Posterior cingulate gyrus (tissue), 11 donors: ENCODE measurements at regions of chr9 and their contacts with region 1.

Region 1: DNA sequence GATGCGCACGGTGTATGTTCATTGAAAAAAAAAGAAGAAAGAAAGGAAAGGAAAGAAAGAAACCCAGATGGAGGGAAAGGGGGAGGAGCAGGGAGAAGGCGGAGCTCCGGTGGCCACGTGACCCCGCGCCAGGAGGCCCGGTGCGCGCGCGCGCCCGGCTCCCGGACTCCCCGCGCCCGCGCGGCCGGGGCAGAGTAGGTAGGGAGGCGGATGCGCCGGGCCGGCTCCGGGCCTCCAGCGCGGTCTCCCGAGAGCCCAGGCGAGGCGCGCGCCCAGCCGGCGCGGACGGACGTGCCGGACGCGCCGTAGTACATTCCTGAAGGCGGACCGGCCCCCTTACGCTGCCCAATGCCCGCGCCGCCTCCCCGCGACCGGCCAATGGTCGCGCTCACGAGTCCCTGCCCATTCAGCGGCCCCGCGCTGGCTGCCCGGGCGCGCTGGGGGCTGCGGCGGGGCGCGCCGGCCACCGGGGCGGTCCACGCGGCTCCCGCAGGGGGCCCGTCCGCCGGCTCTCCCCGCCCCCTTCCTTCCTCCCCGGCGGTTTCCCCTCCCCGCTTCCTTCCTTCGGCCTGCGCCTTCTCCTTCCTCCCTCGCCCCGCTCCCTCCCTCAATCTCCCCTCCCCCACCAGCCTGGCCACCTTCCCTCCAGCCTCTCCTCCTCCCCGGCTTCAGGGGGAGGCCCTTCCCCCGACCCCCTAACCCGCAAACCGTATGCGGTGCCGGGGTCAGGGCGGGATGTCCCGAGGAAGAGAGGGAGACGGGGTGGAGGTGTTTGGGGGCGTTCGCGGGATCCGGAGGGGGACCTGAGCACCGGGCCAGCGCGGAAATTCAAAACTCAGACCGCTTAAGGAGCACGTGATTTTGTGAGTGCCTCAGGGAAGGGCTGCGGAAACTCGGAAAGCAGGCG is 5.8 kb downstream of the PTCH1 start:
- DNase-seq: peak; percentile 80 to 98 (median 87)

Region 2: DNA sequence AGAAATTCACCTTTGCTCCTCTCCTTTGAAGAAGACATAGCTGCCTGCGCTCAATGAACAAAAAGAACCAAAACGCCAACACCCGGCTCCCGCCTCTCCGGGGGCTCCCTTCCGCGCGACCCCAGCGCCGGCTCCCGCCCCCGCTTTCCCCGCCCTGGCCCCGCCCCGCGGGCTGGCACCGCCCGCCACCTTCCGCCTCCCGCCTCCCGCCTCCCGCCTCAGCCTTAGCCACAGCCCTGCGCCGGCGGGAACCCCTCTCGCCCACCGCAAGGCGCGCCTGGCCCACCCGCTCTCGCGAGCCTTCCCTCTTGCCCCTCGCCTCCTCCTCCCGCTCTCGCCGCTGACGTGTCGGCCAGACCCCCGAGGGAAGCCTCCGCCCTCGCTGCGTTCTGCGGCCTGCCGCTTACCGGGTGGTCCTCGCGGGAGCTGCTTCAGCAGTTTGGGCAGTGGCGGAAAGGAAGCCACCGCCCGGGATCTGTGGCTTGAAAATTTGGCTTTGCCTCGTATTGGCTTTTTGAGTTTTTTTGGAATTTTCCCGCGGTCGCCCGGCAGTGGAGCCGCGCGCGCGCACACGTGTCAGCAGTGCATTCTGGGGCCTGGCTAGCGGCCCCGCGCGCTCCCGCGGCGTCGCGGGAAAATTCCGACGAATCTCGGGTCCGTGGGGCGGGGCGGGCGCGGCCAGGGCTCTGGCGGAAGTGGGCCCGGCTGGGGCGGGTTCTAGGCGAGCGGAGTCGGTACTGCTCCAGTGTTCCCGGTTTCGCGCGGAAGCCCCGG is 193.7 kb before region 1 on chr9 and contains the start of gene FANCC:
- intact Hi-C with region 1: loop called (anchors 5 kb)
- DNase-seq: peak; percentile 83 to 98 (median 92)

Region 3: GRCh38 chr9:95462249-95463147 is 48.5 kb before region 1 on chr9:
- intact Hi-C with region 1: loop called (anchors 5 kb)
- DNase-seq: peak; percentile 60 to 96 (median 78)

Region 4: GRCh38 chr9:95875305-95876137 is 364.6 kb after region 1 on chr9 and contains the start of gene ERCC6L2:
- intact Hi-C with region 1: loop called (anchors 5 kb)
- DNase-seq: peak; percentile 85 to 98 (median 90)

Region 5: GRCh38 chr9:96009690-96010472 is 498.9 kb after region 1 on chr9:
- intact Hi-C with region 1: no loop called
- DNase-seq: no peak

Region 6: GRCh38 chr9:96116275-96117064 is 605.5 kb after region 1 on chr9:
- intact Hi-C with region 1: loop called (anchors 10 kb)
- DNase-seq: peak; percentile 80 to 98 (median 88)

Region 7: GRCh38 chr9:96309850-96310249 is 798.9 kb after region 1 on chr9:
- intact Hi-C with region 1: no loop called
- DNase-seq: no peak